ENCODE measurements at regions of chr7 and their contacts with region 1.

Region 1: GRCh38 chr7:106659963-106660861 is 746 bp downstream of the CCDC71L start:
- DNase-seq: peak; percentile 87
- H3K4me3 Mint-ChIP-seq: peak overlapping the region; percentile 87
- H3K27ac Mint-ChIP-seq: peak overlapping the region; percentile 95
- H3K4me1 Mint-ChIP-seq: peaks cover 23% of the 10 kb centered on the region
- H3K27me3 Mint-ChIP-seq: no peaks in the 10 kb centered on the region

Region 2: DNA sequence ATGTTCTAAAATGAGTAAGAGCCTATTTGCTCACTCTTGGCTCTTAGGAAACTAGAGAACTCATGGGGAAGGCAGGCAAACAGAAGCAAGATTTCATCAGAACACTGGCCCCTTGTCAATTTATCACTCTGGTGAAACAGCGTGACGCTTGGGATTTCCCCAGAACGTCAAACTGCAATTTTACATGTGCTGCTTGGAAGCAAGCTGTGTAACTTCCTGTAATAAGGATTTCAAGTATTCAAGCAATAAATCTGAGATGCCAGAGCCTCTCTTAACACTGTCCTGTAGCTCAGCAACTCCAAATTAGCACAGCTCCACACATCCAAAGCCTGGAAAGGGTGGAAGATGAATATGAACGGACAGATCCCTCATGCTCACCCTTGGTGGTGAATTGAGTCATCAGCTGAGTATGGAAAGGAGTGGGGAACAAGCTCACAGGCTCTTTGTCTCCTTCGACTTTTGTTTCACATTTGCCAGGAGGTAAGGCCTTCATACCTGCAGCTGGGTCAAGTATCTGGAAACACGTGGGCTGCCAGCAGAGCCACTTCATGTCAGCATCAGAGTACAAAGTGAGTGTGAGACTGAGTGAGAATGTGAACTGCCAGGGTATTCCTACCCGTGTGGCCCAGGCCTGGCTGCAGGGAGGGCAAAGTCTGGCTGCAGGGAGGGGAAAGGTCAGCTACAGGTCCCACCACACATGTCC is 235.0 kb before region 1 on chr7:
- CTCF ChIA-PET with region 1: interaction called, 4 read pairs
- intact Hi-C with region 1: loop called (anchors 2 kb)
- DNase-seq: peak; percentile 96
- H3K4me3 Mint-ChIP-seq: peak overlapping the region; percentile 80
- H3K27ac Mint-ChIP-seq: peak overlapping the region; percentile 99
- H3K4me1 Mint-ChIP-seq: peaks cover 86% of the 10 kb centered on the region
- H3K27me3 Mint-ChIP-seq: peaks cover 3% of the 10 kb centered on the region

Region 3: GRCh38 chr7:106598663-106599342 is 61.4 kb before region 1 on chr7:
- CTCF ChIA-PET with region 1: interaction called, 3 read pairs
- intact Hi-C with region 1: loop called (anchors 1 kb)
- DNase-seq: peak; percentile 85
- H3K4me3 Mint-ChIP-seq: peak overlapping the region; percentile 44
- H3K27ac Mint-ChIP-seq: no peak overlapping the region
- H3K4me1 Mint-ChIP-seq: peaks cover 4% of the 10 kb centered on the region
- H3K27me3 Mint-ChIP-seq: no peaks in the 10 kb centered on the region

Region 4: DNA sequence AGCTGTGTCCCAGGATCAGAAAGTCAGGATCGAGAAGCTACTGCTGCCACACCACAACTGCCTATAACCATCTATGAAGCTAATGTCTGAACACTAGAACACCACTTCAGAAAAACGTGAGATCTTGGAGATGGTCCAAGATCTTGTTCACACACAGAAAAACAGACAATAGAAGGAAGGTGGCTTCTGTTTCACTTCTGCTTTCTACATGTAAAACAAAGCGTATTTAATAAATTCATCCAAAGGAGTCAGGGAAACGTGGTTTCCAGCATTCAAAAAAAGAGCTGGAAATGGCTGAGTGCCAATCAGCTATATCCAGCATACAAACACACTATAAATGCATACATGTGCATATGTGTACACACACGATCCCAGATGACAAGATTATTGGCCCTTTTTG is 71.0 kb after region 1 on chr7:
- CTCF ChIA-PET with region 1: interaction called, 140 read pairs
- intact Hi-C with region 1: loop called (anchors 1 kb)
- DNase-seq: no peak
- H3K4me3 Mint-ChIP-seq: peak overlapping the region; percentile 7
- H3K27ac Mint-ChIP-seq: peak overlapping the region; percentile 31
- H3K4me1 Mint-ChIP-seq: peaks cover 36% of the 10 kb centered on the region
- H3K27me3 Mint-ChIP-seq: no peaks in the 10 kb centered on the region

Region 5: DNA sequence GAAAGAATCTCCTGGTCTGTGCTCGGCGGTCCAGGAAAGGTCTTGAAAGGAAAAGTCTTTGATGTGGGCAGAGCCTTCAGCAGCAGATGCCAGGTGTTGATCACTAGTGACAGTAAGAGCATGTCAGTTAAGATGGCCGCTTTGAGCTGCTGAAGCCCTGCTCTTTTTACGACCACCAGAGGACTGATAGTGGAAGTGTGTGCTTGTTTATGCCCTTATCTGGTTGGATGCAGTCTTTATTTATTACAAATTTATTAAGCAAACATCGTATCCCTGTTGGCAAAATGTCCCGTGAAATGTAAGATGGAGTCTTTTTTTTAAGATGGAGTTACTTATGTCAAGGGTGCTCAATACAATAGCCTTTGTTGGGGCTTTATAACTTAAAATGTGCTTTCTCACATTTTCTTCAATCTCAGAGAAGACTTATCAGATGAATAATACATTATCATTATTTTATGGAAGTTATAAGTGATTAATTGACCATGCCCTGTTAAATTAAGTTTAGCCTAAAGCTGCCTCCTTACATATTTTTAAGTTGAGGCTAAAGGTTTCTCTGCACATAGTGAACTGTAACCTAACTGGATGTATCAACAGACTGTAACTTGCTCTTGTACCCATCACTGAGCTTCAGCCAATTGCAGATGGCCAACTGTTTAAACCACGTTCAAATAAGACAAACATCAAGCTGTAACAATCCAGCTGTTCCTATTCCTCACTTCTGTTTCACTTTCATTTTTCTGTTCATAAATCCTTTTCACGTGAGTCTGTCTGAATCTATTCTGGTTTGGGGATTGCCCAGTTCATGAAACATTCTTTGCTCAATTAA is 107.5 kb after region 1 on chr7:
- CTCF ChIA-PET with region 1: interaction called, 5 read pairs
- intact Hi-C with region 1: loop called (anchors 1 kb)
- DNase-seq: peak; percentile 25
- H3K4me3 Mint-ChIP-seq: peak overlapping the region; percentile 20
- H3K27ac Mint-ChIP-seq: peak overlapping the region; percentile 13
- H3K4me1 Mint-ChIP-seq: peaks cover 43% of the 10 kb centered on the region
- H3K27me3 Mint-ChIP-seq: no peaks in the 10 kb centered on the region

Region 6: GRCh38 chr7:106781007-106781406 is 120.8 kb after region 1 on chr7:
- CTCF ChIA-PET with region 1: no interaction called
- intact Hi-C with region 1: no loop called
- DNase-seq: no peak
- H3K4me3 Mint-ChIP-seq: no peak overlapping the region
- H3K27ac Mint-ChIP-seq: no peak overlapping the region
- H3K4me1 Mint-ChIP-seq: peaks cover 1% of the 10 kb centered on the region
- H3K27me3 Mint-ChIP-seq: no peaks in the 10 kb centered on the region

Region 7: GRCh38 chr7:106824458-106824857 is 164.2 kb after region 1 on chr7:
- CTCF ChIA-PET with region 1: no interaction called
- intact Hi-C with region 1: no loop called
- DNase-seq: no peak
- H3K4me3 Mint-ChIP-seq: no peak overlapping the region
- H3K27ac Mint-ChIP-seq: no peak overlapping the region
- H3K4me1 Mint-ChIP-seq: no peaks in the 10 kb centered on the region
- H3K27me3 Mint-ChIP-seq: no peaks in the 10 kb centered on the region

Measured in activated naive CD4-positive, alpha-beta T cell treated with anti-CD3 and anti-CD28 coated beads for 36 hours (primary cell).